ENCODE measurements at regions of chr12 and their contacts with region 1.

Region 1: DNA sequence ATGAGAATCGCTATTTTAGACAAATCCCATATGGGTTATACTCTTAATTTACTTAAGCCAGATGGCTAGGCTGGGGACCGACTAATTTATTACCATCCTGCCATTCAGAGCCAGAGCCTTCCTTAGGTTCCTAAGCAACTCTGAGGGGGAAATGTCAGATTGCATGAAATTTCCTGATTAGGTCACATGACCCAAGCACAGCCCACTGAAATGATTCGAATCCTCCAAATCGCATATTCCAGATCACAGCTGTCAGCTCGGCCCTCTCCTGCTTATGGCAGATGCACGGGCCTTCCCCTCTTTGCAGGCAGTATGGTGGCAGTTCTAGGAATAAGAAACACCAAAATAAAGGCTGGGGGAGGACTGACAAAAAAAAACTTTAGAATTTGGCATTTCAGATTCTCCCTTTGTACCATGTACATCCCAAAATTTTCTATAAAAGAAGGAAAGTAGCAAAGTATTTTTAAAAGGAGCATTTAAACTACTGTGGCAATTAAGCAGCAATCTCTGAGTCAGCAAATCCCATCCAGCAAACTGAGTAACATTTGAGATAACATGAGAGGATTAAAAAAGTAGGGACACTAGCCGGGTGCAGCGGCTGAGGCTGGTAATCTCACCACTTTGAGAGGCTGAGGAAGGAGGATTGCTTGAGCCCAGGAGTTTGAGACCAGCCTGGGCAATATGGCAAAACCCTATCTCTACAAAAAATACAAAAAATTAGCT is 30.5 kb upstream of the NUDT4 start:
- DNase-seq: peak in 2 of 10 donors; percentile 30 to 38
- H3K4me3 ChIP-seq: no peak overlapping the region
- H3K27ac ChIP-seq: peak overlapping the region in 18 of 59 donors; percentile 5 to 62 (median 40)
- H3K27me3 ChIP-seq: no peaks in the 10 kb centered on the region
- CTCF ChIP-seq: no peak

Region 2: GRCh38 chr12:93060666-93061471 is 286.3 kb before region 1 on chr12:
- intact Hi-C with region 1: loop called in 1 of 2 experiments (anchors 5 kb)
- DNase-seq: peak in 1 of 10 donors; percentile 21
- H3K4me3 ChIP-seq: peak overlapping the region in 11 of 59 donors; percentile 6 to 39 (median 14)
- H3K27ac ChIP-seq: peak overlapping the region in 53 of 59 donors; percentile 5 to 82 (median 56)
- H3K27me3 ChIP-seq: peaks cover 0 to 17% (median 0%) of the 10 kb centered on the region in 45 donors
- CTCF ChIP-seq: no peak

Region 3: DNA sequence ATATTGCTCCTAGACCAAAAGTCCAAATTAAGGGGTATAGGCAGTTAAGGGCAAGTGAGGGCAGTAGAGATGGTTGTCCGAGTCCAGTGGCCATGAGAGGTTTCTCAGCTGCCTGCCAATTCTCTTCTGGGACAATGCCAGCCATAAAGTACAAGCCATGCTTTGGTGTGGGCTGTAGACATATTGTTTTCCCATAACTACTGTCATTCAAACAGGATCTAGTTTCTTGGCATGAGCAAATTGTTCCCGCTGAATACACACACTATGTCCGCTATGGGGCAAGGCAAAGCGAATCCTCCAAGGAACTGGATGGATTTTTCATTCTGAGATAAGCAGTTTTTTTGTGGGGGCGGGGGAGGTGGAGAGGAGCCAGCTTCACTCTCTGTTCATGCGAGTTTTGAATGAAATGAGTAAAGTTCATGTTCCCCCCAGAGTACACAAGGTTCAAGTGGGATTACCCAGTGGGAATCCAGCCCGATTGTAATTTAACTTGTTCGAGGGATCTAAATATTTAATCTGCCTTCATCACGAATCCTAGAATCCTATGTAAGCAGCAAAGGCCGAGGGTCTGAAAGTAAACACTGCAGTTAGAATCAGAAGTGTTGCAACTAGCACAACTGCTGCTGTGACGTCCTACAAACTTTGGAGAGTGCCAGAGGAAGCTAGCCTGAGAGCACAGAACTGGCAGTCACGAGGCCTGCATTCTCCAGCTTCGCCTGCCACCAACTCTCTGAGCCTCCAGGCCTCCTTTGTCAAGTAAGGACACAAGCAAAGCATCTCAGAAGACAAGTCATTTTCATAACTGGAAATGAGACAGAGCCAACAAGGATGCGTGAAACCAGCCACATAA is 467.0 kb after region 1 on chr12:
- intact Hi-C with region 1: no loop called
- DNase-seq: peak in 8 of 10 donors; percentile 36 to 74 (median 62)
- H3K4me3 ChIP-seq: peak overlapping the region in 15 of 59 donors; percentile 2 to 48 (median 14)
- H3K27ac ChIP-seq: peak overlapping the region in 50 of 59 donors; percentile 9 to 85 (median 56)
- H3K27me3 ChIP-seq: no peaks in the 10 kb centered on the region
- CTCF ChIP-seq: peak in 2 of 56 donors; percentile 3 to 7

Measured in dorsolateral prefrontal cortex (tissue), 120 donors.